T-cell (primary cell): ENCODE measurements at regions of chr1 and their contacts with region 1.

Region 1: GRCh38 chr1:155172732-155173477 is at the start of gene KRTCAP2:
- DNase-seq: peak; percentile 84 to 97 (median 90)
- ATAC-seq: peak; percentile 78 to 85 (median 84)
- H3K4me3 ChIP-seq: peak within 1 kb of the TSS; percentile 78 to 88
- H3K4me3 Mint-ChIP-seq: peak within 1 kb of the TSS; percentile 99 to 100 (median 99)
- H3K27ac ChIP-seq: peak within 1 kb of the TSS; percentile 78
- H3K27ac Mint-ChIP-seq: peak within 1 kb of the TSS; percentile 99
- H3K4me1 ChIP-seq: peaks cover 16 to 52% of the 10 kb centered on the region in 2 experiments
- H3K4me1 Mint-ChIP-seq: peaks cover 44 to 50% (median 47%) of the 10 kb centered on the region in 3 donors
- H3K27me3 ChIP-seq: no peaks in the 10 kb centered on the region
- H3K27me3 Mint-ChIP-seq: no peaks in the 10 kb centered on the region
- total RNA-seq, gene KRTCAP2: 93.6 to 150 (median 138) TPM

Region 2: DNA sequence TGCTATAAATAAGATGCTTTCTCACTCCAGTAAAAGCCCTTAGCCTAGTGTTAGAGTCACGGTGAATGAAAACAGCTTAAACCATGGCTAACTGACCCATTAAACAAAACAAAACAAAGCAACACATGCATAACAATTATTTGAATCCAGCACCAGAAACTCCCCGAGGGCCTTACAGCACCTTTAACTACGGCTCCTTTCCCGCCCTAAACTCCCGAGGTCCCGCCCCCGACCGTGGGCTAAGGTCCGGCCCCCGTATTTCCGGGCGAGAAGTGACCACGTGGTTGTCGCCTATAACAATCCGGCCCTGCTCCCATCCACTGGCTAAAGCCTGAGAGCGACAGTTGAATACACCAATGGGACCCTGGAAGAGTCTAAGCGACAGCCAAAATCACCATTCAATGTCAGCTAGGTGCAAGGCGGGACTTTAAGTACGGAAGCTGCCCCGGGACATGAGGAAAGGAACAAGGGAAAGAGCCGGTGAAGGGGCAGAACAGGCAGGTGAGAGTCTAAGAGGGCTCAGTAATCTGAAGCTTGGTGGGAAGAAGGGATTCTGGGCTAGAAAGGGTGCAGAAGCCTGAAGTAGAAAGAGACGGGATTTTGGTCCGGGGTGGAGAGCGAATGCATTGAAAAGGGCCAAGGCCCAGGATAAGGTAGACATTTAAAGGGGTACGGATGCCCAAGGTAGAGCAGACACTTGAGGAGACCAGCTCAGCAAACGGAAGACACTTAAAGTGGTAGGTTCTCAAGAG is 189.8 kb before region 1 on chr1 and contains the start of gene FLAD1:
- CTCF ChIA-PET with region 1: interaction called in 1 of 2 experiments, 3 read pairs
- POLR2A ChIA-PET with region 1: interaction called in 1 of 2 experiments, 13 read pairs
- DNase-seq: peak; percentile 85 to 98 (median 95)
- ATAC-seq: peak; percentile 99 to 100 (median 100)
- H3K4me3 ChIP-seq: peak within 1 kb of the TSS; percentile 67 to 84
- H3K4me3 Mint-ChIP-seq: no peak within 1 kb of the TSS
- H3K27ac ChIP-seq: peak within 1 kb of the TSS; percentile 54
- H3K27ac Mint-ChIP-seq: no peak within 1 kb of the TSS
- H3K4me1 ChIP-seq: peaks cover 14 to 28% of the 10 kb centered on the region in 2 experiments
- H3K4me1 Mint-ChIP-seq: peaks cover 0 to 17% (median 13%) of the 10 kb centered on the region in 3 donors
- H3K27me3 ChIP-seq: no peaks in the 10 kb centered on the region
- H3K27me3 Mint-ChIP-seq: no peaks in the 10 kb centered on the region
- total RNA-seq, gene FLAD1: 32.8 to 64.3 (median 53.4) TPM

Region 3: DNA sequence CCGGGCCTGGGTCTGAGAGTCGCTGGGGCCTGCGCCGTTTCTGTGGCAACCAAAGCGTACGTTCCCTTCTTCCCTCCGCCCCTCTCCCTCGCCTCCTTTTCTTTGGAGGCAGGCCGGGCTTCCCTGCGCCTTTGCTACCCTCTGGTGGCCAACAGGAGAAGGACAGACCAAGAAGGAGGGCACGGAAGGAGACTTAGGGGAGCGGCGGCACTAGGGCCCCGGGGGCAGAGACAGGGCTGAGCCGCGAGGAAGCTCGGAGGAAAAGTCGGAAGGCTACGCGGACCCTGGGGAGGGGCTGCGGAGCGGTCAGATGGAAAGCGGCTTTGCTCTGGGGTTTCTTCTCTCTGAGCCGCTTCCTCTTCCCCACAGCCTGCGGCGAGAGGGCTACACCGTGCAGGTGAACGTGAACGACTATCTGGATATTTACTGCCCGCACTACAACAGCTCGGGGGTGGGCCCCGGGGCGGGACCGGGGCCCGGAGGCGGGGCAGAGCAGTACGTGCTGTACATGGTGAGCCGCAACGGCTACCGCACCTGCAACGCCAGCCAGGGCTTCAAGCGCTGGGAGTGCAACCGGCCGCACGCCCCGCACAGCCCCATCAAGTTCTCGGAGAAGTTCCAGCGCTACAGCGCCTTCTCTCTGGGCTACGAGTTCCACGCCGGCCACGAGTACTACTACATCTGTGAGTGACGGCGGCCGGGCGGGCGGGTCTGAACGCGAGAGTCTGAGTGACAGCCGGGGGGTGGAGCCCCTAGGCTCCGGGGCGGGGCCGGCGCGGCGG is 88.0 kb before region 1 on chr1:
- CTCF ChIA-PET with region 1: interaction called, 8 to 17 read pairs
- POLR2A ChIA-PET with region 1: no interaction called
- DNase-seq: peak; percentile 79 to 95 (median 89)
- ATAC-seq: peak; percentile 80 to 84 (median 82)
- H3K4me3 ChIP-seq: peak overlapping the region; percentile 63 to 84
- H3K4me3 Mint-ChIP-seq: peak overlapping the region; percentile 87 to 97 (median 94)
- H3K27ac ChIP-seq: peak overlapping the region; percentile 80
- H3K27ac Mint-ChIP-seq: peak overlapping the region; percentile 81 to 97
- H3K4me1 ChIP-seq: peaks cover 43 to 63% of the 10 kb centered on the region in 2 experiments
- H3K4me1 Mint-ChIP-seq: peaks cover 35 to 46% (median 42%) of the 10 kb centered on the region in 3 donors
- H3K27me3 ChIP-seq: peaks cover 2 to 48% of the 10 kb centered on the region in 2 experiments
- H3K27me3 Mint-ChIP-seq: peaks cover 20 to 31% of the 10 kb centered on the region in 2 donors

Region 4: DNA sequence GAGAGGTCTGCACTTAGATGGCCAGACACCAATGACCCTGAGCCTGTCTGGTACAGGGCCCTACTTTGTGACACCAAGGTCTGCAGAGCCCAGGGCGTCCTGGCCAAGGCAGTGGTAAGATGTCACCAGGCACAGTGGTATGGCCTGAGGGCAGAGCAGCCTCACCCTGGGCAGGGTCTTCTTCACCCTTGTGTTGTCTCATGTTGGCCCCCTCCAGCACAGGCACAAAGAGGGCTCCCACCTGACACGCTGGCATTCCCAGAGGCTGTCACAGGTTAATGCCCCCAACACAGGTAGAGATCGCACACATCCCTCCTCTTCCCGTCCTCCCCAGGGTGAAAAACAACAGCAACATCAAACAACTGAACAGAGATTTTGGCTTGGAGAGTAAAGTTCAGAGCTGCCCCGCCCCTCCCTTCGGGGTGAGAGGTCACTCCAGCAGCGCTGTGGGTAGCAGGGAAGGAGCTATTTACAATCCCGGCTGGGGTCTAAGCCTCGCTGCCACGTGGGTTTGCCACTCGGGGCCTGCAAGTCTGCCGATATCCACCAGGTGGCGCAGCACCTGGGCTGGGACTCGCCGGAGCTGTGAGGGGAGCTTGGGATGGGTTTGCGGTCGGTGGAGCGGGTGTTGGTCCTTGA is 81.7 kb before region 1 on chr1:
- CTCF ChIA-PET with region 1: interaction called, 8 to 29 read pairs
- POLR2A ChIA-PET with region 1: no interaction called
- DNase-seq: peak; percentile 33 to 88 (median 71)
- ATAC-seq: peak; percentile 74 to 83 (median 78)
- H3K4me3 ChIP-seq: no peak overlapping the region
- H3K4me3 Mint-ChIP-seq: no peak overlapping the region
- H3K27ac ChIP-seq: no peak overlapping the region
- H3K27ac Mint-ChIP-seq: no peak overlapping the region
- H3K4me1 ChIP-seq: peaks cover under 1 to 17% of the 10 kb centered on the region in 2 experiments
- H3K4me1 Mint-ChIP-seq: peaks cover 3 to 10% (median 5%) of the 10 kb centered on the region in 3 donors
- H3K27me3 ChIP-seq: peaks cover 0 to 32% of the 10 kb centered on the region in 2 experiments
- H3K27me3 Mint-ChIP-seq: peaks cover 4 to 7% of the 10 kb centered on the region in 2 donors

Region 5: DNA sequence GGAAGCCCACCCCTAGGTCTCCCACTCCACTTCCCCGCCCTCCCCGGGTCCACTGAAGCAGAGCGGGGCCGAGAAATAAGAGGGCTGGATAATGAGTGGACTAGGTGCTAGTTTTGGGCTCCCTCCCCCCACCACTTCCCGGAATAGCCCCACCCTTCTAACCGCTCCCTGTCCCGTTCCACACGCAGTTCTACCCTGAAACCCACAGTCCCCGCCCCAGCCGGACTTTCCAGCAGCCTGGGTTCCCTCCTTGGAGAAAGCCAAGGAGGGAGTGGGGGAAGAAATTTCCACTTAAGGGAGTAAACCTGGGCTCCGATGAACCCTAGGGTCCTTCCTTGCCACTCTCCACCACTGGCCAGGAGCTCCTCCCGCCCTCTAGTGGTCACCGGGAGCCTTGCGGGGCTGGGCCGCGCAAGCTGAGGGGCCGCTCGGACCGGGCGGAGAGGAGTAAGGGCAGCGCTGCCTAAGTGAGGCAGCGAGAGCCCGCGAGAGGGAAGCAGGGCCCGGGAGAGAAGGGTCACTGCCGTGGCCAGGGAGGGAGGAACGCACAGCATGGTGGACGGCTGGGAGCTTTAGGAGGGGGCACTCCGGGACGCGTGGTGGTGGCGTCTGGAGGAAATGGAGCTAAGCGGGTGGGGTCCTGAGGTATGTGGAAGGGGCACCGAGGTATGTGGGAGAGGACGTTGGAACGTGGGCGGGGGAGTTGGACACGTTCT is 20.5 kb after region 1 on chr1:
- CTCF ChIA-PET with region 1: interaction called, 14 to 33 read pairs
- POLR2A ChIA-PET with region 1: interaction called in 1 of 2 experiments, 7 read pairs
- DNase-seq: peak in 27 of 35 experiments; percentile 33 to 76 (median 49)
- ATAC-seq: peak in 3 of 4 experiments; percentile 37 to 52 (median 41)
- H3K4me3 ChIP-seq: peak overlapping the region; percentile 48 to 76
- H3K4me3 Mint-ChIP-seq: peak overlapping the region; percentile 77 to 91 (median 86)
- H3K27ac ChIP-seq: peak overlapping the region; percentile 86
- H3K27ac Mint-ChIP-seq: peak overlapping the region; percentile 93 to 96
- H3K4me1 ChIP-seq: peaks cover 8 to 38% of the 10 kb centered on the region in 2 experiments
- H3K4me1 Mint-ChIP-seq: peaks cover 21 to 37% (median 29%) of the 10 kb centered on the region in 3 donors
- H3K27me3 ChIP-seq: no peaks in the 10 kb centered on the region
- H3K27me3 Mint-ChIP-seq: no peaks in the 10 kb centered on the region

Region 6: DNA sequence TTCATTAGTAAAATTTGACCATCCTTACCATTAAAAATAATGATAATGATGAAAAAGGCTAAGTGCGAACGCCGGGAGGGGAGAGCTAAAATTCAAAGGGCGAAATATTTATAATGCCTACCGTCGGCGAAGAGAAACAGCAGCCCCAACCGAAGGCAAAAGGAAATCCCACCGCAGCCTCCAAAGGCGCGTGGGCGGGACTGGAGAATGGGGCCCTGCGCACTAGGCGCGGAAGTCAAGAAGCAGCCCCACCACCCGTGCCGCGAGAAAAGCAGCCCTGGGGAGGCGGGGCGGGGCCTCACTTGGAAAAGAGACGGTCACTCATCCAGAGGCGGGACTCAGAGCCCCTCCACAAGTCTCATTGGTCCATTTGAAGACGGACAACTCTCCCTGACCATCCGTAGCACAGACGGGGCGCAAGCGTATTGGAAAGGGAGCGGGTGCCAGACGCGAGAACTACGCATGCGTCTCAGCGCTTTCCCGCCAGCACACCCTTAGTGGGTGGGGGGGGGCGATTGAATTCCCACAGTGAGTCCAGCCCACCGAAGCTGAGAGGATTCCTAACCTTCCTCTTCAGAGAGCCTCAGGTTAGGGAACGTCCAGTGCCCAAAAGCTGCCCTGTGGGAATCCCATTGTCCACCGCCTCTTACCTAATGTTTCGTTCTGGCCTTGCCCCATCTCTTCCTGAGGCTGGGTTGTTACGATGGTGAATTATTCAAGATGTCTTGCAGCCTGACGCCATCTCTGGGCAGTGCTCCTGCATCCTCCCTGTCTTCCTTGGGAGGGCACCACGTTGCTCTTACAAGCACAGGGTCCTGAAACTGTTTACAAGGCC is 54.6 kb after region 1 on chr1:
- CTCF ChIA-PET with region 1: interaction called, 4 to 10 read pairs
- POLR2A ChIA-PET with region 1: no interaction called
- DNase-seq: peak; percentile 93 to 100 (median 97)
- ATAC-seq: peak; percentile 94 to 97 (median 96)
- H3K4me3 ChIP-seq: peak overlapping the region; percentile 66 to 81
- H3K4me3 Mint-ChIP-seq: peak overlapping the region; percentile 85 to 93 (median 85)
- H3K27ac ChIP-seq: peak overlapping the region; percentile 87
- H3K27ac Mint-ChIP-seq: peak overlapping the region; percentile 87 to 95
- H3K4me1 ChIP-seq: peaks cover 9 to 24% of the 10 kb centered on the region in 2 experiments
- H3K4me1 Mint-ChIP-seq: peaks cover 22 to 32% (median 31%) of the 10 kb centered on the region in 3 donors
- H3K27me3 ChIP-seq: no peaks in the 10 kb centered on the region
- H3K27me3 Mint-ChIP-seq: no peaks in the 10 kb centered on the region